ENCODE measurements at regions of chr17 and their contacts with region 1.

Region 1: GRCh38 chr17:41496820-41497408 is 7.2 kb upstream of the KRT36 start:
- DNase-seq: peak; percentile 83
- ATAC-seq: peak; percentile 97
- H3K4me3 ChIP-seq: no peak overlapping the region
- H3K27ac ChIP-seq: peak overlapping the region; percentile 36; the same call in 1 of the 2 replicates
- H3K4me1 ChIP-seq: peaks cover 22% of the 10 kb centered on the region
- H3K27me3 ChIP-seq: no peaks in the 10 kb centered on the region
- CTCF ChIP-seq: peak; percentile 93
- POLR2A ChIP-seq: no peak
- RAD21 ChIP-seq: peak; percentile 94

Region 2: GRCh38 chr17:41329281-41329948 is 167.5 kb before region 1 on chr17:
- CTCF ChIA-PET with region 1: interaction called, 3 read pairs
- POLR2A ChIA-PET with region 1: no interaction called
- dilution Hi-C with region 1: no loop called
- in situ Hi-C with region 1: no loop called
- intact Hi-C with region 1: loop called (anchors 2 kb)
- DNase-seq: peak; percentile 56
- ATAC-seq: peak; percentile 96
- H3K4me3 ChIP-seq: no peak overlapping the region
- H3K27ac ChIP-seq: no peak overlapping the region
- H3K4me1 ChIP-seq: no peaks in the 10 kb centered on the region
- H3K27me3 ChIP-seq: no peaks in the 10 kb centered on the region
- CTCF ChIP-seq: peak; percentile 79
- POLR2A ChIP-seq: no peak
- RAD21 ChIP-seq: peak; percentile 82

Measured in IMR-90 (cell line).